Activated T-helper 1 cell treated with anti-CD3 and anti-CD28 coated beads, Interleukin-12 subunit alpha, Interleukin-12 subunit beta, Interleukin-2, Interleukin-4 antibody, amounts not matched to agents 30 ng/mL and 10 ng/mL and 1 ng/mL, durations not matched to agents 14 hours and 24 hours and 36 hours (primary cell): ENCODE measurements at regions of chr12 and their contacts with region 1.

Region 1: DNA sequence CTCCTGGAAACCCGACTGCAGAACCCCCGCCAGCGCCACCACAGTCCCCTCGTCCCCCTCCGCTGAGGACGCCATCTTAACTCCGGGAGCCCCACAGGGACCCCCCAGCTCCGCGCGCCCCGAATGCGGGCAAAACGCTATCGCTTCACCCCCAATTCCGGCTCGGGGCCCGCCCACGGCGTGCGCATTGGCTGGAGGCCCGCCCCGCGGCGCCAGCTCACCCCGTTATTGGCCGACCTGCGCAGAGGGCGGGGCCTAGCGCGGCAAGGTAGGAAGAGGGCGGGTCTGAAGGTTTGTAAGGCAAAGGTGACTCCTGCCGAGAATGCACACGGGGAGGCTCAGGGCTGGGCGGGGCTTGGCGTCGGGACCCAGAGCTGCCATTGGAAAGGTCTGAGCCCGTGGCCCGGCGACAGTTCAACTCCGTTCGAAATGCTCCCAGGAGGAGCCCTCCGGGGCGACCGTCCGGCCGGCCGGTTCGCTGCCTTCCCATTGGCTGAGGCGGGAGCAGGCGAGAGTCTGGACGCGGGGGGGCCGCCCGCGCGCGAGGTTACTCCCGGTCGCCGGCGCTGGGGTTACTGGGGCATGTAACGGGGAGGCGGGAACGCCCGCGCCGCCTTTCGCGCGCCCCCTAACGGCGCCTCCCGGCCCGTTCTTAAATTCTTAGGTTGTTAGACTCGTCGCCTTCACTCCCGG is at the start of gene LPCAT3:
- DNase-seq: peak; percentile 98
- H3K4me3 Mint-ChIP-seq: peak within 1 kb of the TSS; percentile 93
- H3K27ac Mint-ChIP-seq: peak within 1 kb of the TSS; percentile 95
- H3K4me1 Mint-ChIP-seq: peaks cover 36% of the 10 kb centered on the region
- H3K27me3 Mint-ChIP-seq: no peaks in the 10 kb centered on the region
- total RNA-seq, gene LPCAT3: 27.9 and 30.0 TPM in 2 replicates

Region 2: GRCh38 chr12:6867413-6868210 is 150.9 kb before region 1 on chr12 and contains the start of gene TPI1:
- intact Hi-C with region 1: loop called (anchors 1 kb)
- DNase-seq: peak; percentile 75
- H3K4me3 Mint-ChIP-seq: peak within 1 kb of the TSS; percentile 96
- H3K27ac Mint-ChIP-seq: peak within 1 kb of the TSS; percentile 99
- H3K4me1 Mint-ChIP-seq: peaks cover 53% of the 10 kb centered on the region
- H3K27me3 Mint-ChIP-seq: no peaks in the 10 kb centered on the region
- total RNA-seq, gene TPI1: 1,427 and 1,438 TPM in 2 replicates

Region 3: GRCh38 chr12:6904280-6905278 is 113.9 kb before region 1 on chr12 and contains the start of gene LRRC23:
- intact Hi-C with region 1: loop called (anchors 1 kb)
- DNase-seq: peak; percentile 97
- H3K4me3 Mint-ChIP-seq: no peak within 1 kb of the TSS
- H3K27ac Mint-ChIP-seq: no peak within 1 kb of the TSS
- H3K4me1 Mint-ChIP-seq: peaks cover 8% of the 10 kb centered on the region
- H3K27me3 Mint-ChIP-seq: no peaks in the 10 kb centered on the region
- total RNA-seq, gene LRRC23: 5.3 and 5.6 TPM in 2 replicates

Region 4: DNA sequence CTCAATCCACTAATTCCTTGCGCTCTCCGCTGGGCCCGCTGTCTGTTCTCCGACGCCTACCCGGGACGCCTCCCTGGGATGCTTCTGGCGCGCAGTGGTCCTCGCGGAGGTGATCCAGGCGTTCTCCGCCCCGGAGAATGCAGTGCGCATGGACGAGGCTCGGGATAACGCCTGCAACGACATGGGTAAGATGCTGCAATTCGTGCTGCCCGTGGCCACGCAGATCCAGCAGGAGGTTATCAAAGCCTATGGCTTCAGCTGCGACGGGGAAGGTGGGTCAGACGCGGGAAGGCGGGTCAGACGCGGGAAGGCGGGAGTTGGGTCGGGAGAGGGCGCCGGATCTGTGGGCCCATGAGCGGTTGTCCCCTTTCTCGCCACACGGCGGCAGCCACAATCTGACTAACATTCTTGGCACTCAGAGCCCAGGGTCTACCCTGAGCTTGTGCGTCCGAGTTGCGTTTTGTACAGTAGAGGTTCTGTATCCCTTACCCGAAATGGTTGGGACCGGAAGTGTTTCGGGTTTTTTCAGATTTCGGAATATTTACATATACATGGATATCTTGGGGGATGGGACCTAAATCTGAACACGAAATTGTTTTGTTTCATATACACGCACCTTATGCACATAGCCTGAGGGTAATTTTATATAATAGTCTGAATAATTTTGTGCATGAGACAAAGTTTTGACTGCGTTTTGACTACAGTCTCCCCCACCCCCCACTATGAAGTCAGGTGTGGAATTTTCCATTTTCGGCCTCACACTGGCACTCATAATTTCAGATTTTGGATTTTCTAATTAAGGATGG is 73.9 kb before region 1 on chr12:
- intact Hi-C with region 1: loop called (anchors 1 kb)
- DNase-seq: peak; percentile 84
- H3K4me3 Mint-ChIP-seq: peak overlapping the region; percentile 96
- H3K27ac Mint-ChIP-seq: peak overlapping the region; percentile 95
- H3K4me1 Mint-ChIP-seq: peaks cover 71% of the 10 kb centered on the region
- H3K27me3 Mint-ChIP-seq: no peaks in the 10 kb centered on the region

Region 5: DNA sequence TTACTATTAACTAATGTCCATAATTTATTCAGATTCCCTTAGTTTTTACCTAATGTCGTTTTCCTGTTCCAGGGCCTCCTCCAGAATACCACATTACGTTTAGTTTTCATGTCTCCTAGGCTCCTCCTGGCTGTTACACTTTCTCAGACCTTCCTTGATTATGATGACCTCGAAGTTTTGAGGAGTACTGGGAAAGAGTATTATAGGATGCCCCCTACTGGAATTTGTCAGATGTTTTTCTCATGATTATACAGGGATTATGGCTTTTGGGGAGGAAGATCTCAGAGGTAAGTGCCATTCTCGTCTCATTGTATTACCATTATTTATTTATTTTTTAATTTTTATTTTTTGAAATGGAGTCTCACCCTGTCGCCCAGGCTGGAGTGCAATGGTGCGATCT is 24.3 kb after region 1 on chr12:
- intact Hi-C with region 1: loop called (anchors 1 kb)
- DNase-seq: no peak
- H3K4me3 Mint-ChIP-seq: no peak overlapping the region
- H3K27ac Mint-ChIP-seq: no peak overlapping the region
- H3K4me1 Mint-ChIP-seq: peaks cover 15% of the 10 kb centered on the region
- H3K27me3 Mint-ChIP-seq: peaks cover 6% of the 10 kb centered on the region

Region 6: GRCh38 chr12:7108796-7109571 is 90.5 kb after region 1 on chr12 and contains the start of gene C1RL:
- intact Hi-C with region 1: loop called (anchors 1 kb)
- DNase-seq: peak; percentile 71
- H3K4me3 Mint-ChIP-seq: peak within 1 kb of the TSS; percentile 94
- H3K27ac Mint-ChIP-seq: peak within 1 kb of the TSS; percentile 91
- H3K4me1 Mint-ChIP-seq: peaks cover 55% of the 10 kb centered on the region
- H3K27me3 Mint-ChIP-seq: no peaks in the 10 kb centered on the region
- total RNA-seq, gene C1RL: 21.5 and 21.8 TPM in 2 replicates

Region 7: DNA sequence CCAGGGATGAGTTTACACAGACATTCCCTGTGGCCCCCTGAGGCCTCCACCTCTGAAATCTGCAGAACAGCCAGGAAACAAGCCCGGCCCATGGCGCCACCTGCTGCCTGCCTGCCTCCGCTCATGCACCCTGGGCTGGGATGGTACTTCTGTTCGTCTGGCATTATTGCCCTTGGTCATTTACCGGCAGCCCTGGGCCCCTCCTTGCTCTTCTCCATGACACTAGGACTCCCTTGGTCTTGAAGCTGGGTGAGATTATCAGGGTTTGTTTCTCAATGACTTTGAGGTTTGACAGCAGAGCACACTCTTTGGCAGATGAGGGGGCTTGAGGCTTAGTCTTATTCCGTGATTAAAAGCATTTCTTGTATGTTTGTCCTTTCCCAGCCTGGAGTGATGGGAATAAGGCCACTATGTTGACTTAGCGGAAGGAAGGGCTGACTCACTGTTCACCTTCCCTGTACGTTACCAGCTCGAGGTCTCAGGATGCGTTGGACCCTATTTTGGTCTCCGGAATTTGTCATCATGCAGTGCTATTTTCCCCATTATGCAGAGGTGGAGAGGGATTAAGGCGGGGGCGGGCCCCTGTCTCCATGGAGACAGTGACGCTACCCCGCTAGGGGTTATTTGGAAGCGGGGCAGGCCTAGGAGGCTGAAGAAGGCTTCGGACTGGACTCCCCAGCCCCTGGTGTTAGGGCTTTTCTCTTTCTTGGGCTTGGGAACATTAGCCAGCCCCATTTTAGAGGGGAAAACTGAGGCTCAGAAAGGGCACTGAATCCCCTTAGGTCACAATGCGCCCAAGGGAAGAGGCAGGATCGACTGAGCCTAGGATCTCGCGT is 170.3 kb after region 1 on chr12:
- intact Hi-C with region 1: loop called (anchors 1 kb)
- DNase-seq: peak; percentile 49
- H3K4me3 Mint-ChIP-seq: peak overlapping the region; percentile 93
- H3K27ac Mint-ChIP-seq: peak overlapping the region; percentile 98
- H3K4me1 Mint-ChIP-seq: peaks cover 31% of the 10 kb centered on the region
- H3K27me3 Mint-ChIP-seq: peaks cover 4% of the 10 kb centered on the region

Region 8: GRCh38 chr12:7361265-7361664 is 342.8 kb after region 1 on chr12:
- intact Hi-C with region 1: no loop called
- DNase-seq: no peak
- H3K4me3 Mint-ChIP-seq: no peak overlapping the region
- H3K27ac Mint-ChIP-seq: no peak overlapping the region
- H3K4me1 Mint-ChIP-seq: no peaks in the 10 kb centered on the region
- H3K27me3 Mint-ChIP-seq: no peaks in the 10 kb centered on the region